HepG2 (cell line): ENCODE measurements at regions of chr2 and their contacts with region 1.

Region 1: DNA sequence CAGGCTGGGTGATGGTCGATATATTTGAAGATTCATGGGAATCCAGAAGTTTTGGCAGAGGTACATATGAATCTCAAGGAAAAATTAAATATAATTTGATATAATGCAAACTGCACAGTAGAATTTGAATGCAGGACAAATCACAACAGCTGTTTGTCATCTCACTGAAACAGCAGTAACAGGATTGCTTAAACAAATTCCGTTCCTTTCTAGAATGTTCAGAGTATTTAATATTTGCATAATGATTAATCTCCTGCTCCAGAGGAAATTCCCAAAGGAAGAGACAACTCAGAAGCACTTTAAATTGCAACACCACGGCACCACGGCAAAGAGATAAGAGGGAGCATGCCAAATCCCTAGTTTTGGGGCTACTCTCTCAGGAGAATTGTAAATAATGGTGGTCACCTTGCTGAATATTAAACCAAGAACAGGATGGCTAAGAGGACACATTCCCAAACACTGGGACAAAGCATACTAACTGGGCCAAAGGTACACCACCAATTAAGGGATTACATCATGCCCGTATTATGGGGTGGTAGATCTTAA is 67.8 kb upstream of the MAP4K3 start:
- DNase-seq: peak; percentile 92
- ATAC-seq: peak; percentile 18
- H3K4me3 ChIP-seq: peak overlapping the region; percentile 8 to 58 (median 41)
- H3K27ac ChIP-seq: peak overlapping the region; percentile 90
- H3K4me1 ChIP-seq: peaks cover 69% of the 10 kb centered on the region
- H3K27me3 ChIP-seq: no peaks in the 10 kb centered on the region
- CTCF ChIP-seq: no peak
- EP300 ChIP-seq: peak in 1 of 2 experiments; percentile 90; a peak in 2 of 4 replicates
- POLR2A ChIP-seq: no peak
- RAD21 ChIP-seq: no peak

Region 2: DNA sequence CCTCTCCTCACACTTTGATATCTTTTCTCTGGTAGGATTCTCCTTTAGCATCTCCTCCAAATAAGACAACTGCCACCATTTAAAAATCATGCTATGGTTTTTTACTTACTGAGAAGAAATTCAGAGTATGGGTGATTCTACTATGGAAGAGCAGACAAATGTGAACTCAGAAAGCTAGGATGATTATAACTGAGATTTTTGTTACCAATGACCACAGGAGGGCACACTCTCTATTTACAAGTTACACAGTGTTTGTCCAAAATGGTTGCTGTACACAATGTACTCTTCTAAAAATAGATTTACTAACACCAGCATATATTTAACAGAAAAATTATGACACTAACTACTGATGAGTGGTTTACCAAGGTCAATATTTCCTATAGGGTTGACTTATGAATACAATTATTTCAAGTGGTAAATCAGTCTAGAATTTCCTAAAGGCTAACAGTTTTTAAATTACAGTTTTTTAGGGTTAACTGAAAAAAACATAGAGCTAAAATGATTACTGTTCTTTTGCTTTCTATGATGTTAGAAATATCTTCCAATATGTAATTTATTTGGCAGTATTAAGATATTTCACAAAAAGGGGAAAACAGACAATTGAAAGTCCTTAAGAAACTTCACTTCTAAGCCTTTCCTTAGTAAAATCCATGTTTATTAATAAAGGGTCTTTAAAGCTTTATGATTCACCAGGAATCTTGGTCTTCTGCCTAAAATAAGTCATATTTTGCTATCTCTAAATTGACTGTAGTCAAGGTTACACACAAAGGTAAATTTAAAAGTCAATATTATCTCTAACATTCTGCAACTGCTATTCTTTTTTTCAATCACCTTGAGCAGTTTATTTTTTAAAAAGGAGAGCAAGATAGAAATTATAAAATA is 125.0 kb before region 1 on chr2:
- CTCF ChIA-PET with region 1: no interaction called
- POLR2A ChIA-PET with region 1: no interaction called
- in situ Hi-C with region 1: no loop called
- intact Hi-C with region 1: loop called (anchors 2 kb)
- DNase-seq: peak; percentile 59
- ATAC-seq: peak; percentile 77
- H3K4me3 ChIP-seq: no peak overlapping the region
- H3K27ac ChIP-seq: peak overlapping the region; percentile 36
- H3K4me1 ChIP-seq: peaks cover 47% of the 10 kb centered on the region
- H3K27me3 ChIP-seq: no peaks in the 10 kb centered on the region
- CTCF ChIP-seq: peak; percentile 80
- EP300 ChIP-seq: no peak
- POLR2A ChIP-seq: no peak
- RAD21 ChIP-seq: peak; percentile 73

Region 3: DNA sequence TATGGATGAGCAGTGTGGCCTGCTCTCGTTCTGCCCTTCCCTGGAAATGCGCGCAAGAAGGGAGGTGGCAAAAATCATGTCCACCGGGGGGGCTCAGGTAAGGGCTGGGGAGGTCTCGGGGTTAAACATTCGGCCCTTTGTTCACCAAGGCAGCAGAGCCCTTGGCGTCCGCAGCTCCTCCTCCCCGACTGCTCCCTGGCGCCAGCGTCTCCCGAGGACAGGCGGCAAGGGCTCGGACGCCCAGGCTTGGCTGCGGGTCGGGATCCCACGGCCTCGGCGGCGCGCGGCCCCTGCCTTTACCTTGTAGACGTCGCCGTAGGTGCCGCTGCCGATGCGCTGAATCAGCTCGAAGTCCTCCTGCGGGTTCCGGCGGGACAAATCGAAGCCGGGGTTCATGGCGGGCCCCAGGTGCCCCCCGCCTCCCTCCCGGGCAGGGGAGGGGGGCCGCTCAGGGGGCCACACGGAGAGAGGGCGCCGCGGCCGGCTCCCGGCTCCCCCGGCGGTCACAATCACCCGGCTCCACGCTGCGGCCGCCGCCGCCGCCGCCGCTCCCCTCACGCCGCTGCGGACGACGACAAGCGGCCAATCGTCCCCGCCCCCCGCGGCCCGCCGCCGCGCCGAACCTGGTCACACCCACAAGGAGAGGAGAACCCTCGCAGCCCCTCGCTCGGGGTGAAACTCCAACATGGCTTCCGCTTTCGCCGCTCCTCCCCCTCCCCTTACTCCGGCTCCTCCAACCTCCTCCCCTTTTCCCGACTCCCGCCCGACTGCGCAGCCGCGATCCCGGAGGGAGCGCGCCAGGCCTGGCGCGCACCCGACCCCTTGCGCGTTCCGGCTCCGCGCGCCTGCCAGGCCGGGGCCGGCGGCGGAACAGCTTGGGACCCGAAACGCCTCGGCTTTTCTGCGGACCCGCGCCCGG is 68.0 kb before region 1 on chr2 and contains the start of gene MAP4K3:
- CTCF ChIA-PET with region 1: no interaction called
- POLR2A ChIA-PET with region 1: interaction called, 8 read pairs
- in situ Hi-C with region 1: loop called (anchors 5 kb)
- intact Hi-C with region 1: loop called (anchors 2 kb)
- DNase-seq: peak; percentile 96
- ATAC-seq: peak; percentile 85
- H3K4me3 ChIP-seq: peak within 1 kb of the TSS; percentile 92 to 95 (median 93)
- H3K27ac ChIP-seq: peak within 1 kb of the TSS; percentile 94
- H3K4me1 ChIP-seq: peaks cover 62% of the 10 kb centered on the region
- H3K27me3 ChIP-seq: no peaks in the 10 kb centered on the region; a peak in 1 of 5 replicates
- CTCF ChIP-seq: peak; percentile 32
- EP300 ChIP-seq: peak in 1 of 2 experiments; percentile 42; a peak in 1 of 4 replicates
- POLR2A ChIP-seq: peak; percentile 64 to 81
- RAD21 ChIP-seq: peak; percentile 63
- total RNA-seq, gene MAP4K3: 45.9 and 49.6 TPM in 2 replicates

Region 4: DNA sequence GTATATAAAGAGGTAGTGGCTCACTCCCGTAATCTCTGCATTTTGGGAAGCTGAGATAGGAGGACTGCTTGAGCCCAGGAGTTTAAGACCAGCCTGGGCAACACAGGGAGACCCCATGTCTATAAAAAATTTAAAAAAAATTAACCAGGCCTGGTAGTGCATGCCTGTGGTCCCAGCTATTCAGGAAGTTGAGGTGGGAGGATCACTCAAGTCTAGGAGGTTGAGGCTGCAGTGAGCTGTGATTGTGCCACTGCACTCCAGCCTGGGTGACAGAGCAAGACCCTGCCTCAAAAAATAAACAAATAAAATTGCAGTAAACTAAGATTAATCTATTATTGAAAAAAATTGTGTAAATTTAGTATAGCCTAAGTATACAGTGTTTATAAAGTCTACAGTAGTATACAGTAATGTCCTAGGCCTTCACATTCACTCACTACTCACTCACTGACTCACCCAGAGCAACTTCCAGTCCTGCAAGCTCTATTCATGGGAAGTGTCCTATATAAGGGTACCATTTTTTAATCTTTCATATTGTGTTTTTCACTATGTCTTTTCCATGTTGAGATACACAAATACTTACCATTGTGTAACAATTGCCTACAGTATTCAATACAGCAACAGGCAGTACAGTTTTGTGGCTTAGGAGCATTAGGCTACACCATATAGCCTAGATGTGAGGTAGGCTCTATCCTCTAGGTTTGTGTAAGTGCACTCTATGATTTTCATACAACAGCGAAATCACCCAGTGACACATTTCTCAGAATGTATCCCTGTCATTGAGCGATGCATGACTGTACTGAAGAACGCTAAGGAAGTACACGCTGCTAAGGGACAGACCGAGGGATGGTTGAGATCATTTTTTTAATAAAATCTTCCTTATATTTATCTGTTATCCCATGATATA is 57.3 kb before region 1 on chr2:
- CTCF ChIA-PET with region 1: no interaction called
- POLR2A ChIA-PET with region 1: interaction called, 4 read pairs
- in situ Hi-C with region 1: no loop called
- intact Hi-C with region 1: loop called (anchors 2 kb)
- DNase-seq: no peak
- ATAC-seq: peak; percentile 48
- H3K4me3 ChIP-seq: no peak overlapping the region
- H3K27ac ChIP-seq: peak overlapping the region; percentile 45
- H3K4me1 ChIP-seq: peaks cover 46% of the 10 kb centered on the region
- H3K27me3 ChIP-seq: no peaks in the 10 kb centered on the region
- CTCF ChIP-seq: no peak
- EP300 ChIP-seq: no peak
- POLR2A ChIP-seq: no peak
- RAD21 ChIP-seq: no peak

Region 5: GRCh38 chr2:39469807-39470206 is 35.1 kb before region 1 on chr2:
- CTCF ChIA-PET with region 1: no interaction called
- POLR2A ChIA-PET with region 1: interaction called, 10 read pairs
- in situ Hi-C with region 1: no loop called
- intact Hi-C with region 1: no loop called
- DNase-seq: peak; percentile 88
- ATAC-seq: peak; percentile 98
- H3K4me3 ChIP-seq: peak overlapping the region in 2 of 3 experiments; percentile 27 to 35; a peak in 2 of 6 replicates
- H3K27ac ChIP-seq: peak overlapping the region; percentile 54
- H3K4me1 ChIP-seq: peaks cover 38% of the 10 kb centered on the region
- H3K27me3 ChIP-seq: no peaks in the 10 kb centered on the region
- CTCF ChIP-seq: no peak
- EP300 ChIP-seq: no peak
- POLR2A ChIP-seq: no peak
- RAD21 ChIP-seq: no peak

Region 6: DNA sequence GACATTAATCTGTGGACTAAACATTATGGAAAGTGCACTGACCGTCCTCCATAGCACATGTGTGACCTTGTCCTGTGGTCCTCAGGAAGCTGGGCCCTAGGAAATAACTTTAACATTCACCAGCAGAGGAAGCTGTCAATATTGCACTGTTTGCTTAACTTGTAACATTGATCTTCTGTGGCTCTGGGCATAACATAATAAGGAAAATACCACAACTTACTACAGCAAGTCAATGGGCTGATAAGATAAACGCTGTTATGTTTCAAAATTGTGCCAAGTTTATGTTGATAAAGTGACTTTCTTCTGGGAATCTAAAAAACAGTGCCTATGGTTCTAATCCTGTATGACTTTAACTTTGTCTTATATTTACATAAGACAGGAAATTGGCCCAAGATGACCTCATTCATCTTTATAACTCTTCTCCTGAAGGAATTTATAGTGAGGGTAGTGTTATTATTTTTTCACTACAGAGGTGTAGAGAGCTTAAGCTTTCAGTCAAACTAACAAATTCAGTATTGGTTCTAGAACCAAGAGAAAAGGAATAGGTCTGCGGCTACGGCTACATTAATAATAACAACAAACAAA is 45.9 kb after region 1 on chr2:
- CTCF ChIA-PET with region 1: no interaction called
- POLR2A ChIA-PET with region 1: interaction called, 4 read pairs
- in situ Hi-C with region 1: no loop called
- intact Hi-C with region 1: loop called (anchors 1 kb)
- DNase-seq: peak; percentile 99
- ATAC-seq: peak; percentile 98
- H3K4me3 ChIP-seq: no peak overlapping the region
- H3K27ac ChIP-seq: peak overlapping the region; percentile 72
- H3K4me1 ChIP-seq: peaks cover 69% of the 10 kb centered on the region
- H3K27me3 ChIP-seq: no peaks in the 10 kb centered on the region
- CTCF ChIP-seq: peak; percentile 43
- EP300 ChIP-seq: peak; percentile 65 to 100; a peak in 3 of 4 replicates
- POLR2A ChIP-seq: 0 out of 4 replicates have a peak, but pooled peaks of 1 of the 2 experiments have one; percentile 20
- RAD21 ChIP-seq: 0 out of 2 replicates have a peak, but pooled peaks have one; percentile 14